ENCODE measurements at regions of chr11 and their contacts with region 1.

Region 1: DNA sequence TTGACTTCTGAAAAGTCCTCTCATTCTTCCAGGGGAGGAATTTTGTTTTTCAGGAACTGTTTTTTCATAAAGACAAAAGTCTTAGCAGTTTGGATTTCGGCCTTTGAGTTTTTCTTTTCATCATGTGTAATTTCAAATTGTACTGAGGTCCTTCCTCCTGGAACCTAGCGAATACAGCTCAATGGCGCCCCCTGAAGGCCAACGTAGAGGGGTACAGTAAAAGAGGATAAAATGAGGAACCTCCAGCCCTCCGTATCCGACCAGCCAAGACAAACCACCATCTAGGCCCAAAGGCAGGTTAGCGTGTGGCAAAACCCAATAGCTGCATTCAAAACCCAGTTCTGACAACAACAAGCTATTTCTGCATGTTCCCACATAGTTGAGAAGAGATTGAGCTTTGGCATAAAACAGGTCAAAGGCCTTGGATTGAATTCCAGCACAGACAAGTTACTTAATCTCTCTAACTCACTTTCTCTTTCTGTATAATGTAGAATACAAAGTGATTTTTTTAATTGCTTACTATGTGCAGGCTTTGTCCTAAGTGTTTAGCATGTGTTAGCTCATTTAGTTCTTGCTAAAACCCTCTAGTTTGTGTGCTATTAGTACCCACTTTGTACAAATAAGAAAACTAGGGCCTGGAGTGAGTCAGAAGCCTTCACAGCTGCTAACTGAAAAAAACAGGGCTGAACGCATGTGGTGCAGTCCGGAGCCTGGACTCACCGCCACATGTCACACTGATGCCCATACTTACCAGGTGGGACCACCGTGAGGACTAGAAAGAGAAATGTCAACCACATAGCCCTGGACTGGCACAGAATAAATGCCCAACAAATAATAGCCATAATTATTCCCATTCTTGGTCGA is 43.2 kb upstream of the ETS1 start:
- DNase-seq: peak; percentile 91
- H3K4me3 Mint-ChIP-seq: peak overlapping the region; percentile 38
- H3K27ac Mint-ChIP-seq: peak overlapping the region; percentile 85
- H3K4me1 Mint-ChIP-seq: peaks cover 63% of the 10 kb centered on the region
- H3K27me3 Mint-ChIP-seq: no peaks in the 10 kb centered on the region

Region 2: GRCh38 chr11:128157423-128158298 is 472.9 kb before region 1 on chr11:
- CTCF ChIA-PET with region 1: interaction called, 62 read pairs
- POLR2A ChIA-PET with region 1: no interaction called
- DNase-seq: peak; percentile 52
- H3K4me3 Mint-ChIP-seq: peak overlapping the region; percentile 53
- H3K27ac Mint-ChIP-seq: peak overlapping the region; percentile 55
- H3K4me1 Mint-ChIP-seq: peaks cover 7% of the 10 kb centered on the region
- H3K27me3 Mint-ChIP-seq: peaks cover 8% of the 10 kb centered on the region

Region 3: GRCh38 chr11:128458321-128458720 is 172.3 kb before region 1 on chr11:
- CTCF ChIA-PET with region 1: interaction called, 5 read pairs
- POLR2A ChIA-PET with region 1: interaction called, 10 read pairs
- DNase-seq: no peak
- H3K4me3 Mint-ChIP-seq: no peak overlapping the region
- H3K27ac Mint-ChIP-seq: peak overlapping the region; percentile 7
- H3K4me1 Mint-ChIP-seq: peaks cover 67% of the 10 kb centered on the region
- H3K27me3 Mint-ChIP-seq: no peaks in the 10 kb centered on the region

Region 4: DNA sequence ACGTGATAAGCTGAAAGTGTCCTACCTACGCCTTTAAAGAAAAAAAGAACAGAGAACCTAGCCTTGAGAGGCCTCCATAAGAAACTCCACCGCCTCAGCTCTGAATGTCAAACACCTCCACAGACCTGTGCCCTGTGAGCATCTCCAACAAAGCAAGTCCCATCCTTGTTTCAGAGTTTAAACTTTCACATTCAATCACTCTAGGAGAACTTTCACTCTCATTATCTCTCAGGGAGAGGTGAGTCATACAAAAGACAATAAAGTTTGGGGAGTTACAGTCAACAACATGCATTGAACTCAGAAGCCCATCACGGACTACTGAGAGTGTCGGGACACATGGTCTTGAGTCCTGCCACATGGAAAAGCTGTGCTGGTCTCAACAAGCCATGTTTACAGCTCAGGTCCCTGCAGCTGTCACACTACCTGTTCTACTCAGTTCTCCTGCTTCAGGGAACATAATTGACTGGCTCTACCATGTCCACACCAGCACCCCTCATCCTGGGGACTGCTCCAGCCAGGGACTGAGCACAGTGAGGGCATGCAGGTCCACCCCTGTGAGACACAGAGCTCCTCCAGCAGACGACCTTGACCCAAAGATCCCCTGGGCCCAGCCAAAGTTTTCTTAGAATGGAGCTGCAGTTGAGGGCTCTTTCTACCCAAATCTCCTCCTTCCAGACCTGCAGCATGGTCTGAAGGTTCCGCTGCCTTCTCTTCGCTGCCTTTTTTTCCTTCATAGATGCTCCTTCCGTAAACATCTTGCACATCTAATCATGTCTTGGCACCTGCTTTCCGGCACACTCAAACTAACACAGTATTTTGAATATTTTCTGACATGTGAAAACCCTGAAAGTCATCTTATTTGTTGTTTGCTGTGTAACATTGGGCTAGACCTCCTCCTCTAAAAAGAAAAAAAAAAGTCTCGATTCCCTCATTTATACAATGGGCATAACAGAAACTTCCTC is 158.2 kb before region 1 on chr11:
- CTCF ChIA-PET with region 1: interaction called, 16 read pairs
- POLR2A ChIA-PET with region 1: interaction called, 17 read pairs
- DNase-seq: no peak
- H3K4me3 Mint-ChIP-seq: peak overlapping the region; percentile 44
- H3K27ac Mint-ChIP-seq: peak overlapping the region; percentile 80
- H3K4me1 Mint-ChIP-seq: peaks cover 99% of the 10 kb centered on the region
- H3K27me3 Mint-ChIP-seq: no peaks in the 10 kb centered on the region

Region 5: DNA sequence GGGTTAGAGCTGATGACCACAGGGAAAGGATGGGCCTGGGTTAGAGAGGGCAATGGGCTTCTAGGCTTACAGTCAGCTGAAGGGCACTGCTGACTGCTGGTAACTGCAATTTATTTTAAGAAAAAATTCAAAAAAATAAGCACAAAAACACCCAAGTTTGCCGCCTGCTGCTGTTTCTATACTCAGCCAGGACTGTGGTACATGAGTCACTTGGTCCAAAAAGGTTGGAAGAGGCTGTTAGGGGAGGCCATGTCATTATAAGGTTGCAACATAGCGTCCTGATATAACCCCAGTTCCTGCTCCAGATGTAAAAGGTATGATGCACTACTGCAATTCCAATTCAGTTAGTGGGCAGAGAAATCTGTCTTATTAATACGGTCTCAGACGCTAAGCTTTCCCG is 142.1 kb before region 1 on chr11:
- CTCF ChIA-PET with region 1: interaction called, 8 read pairs
- POLR2A ChIA-PET with region 1: interaction called, 19 read pairs
- DNase-seq: no peak
- H3K4me3 Mint-ChIP-seq: peak overlapping the region; percentile 29
- H3K27ac Mint-ChIP-seq: peak overlapping the region; percentile 87
- H3K4me1 Mint-ChIP-seq: peaks cover 95% of the 10 kb centered on the region
- H3K27me3 Mint-ChIP-seq: no peaks in the 10 kb centered on the region

Region 6: DNA sequence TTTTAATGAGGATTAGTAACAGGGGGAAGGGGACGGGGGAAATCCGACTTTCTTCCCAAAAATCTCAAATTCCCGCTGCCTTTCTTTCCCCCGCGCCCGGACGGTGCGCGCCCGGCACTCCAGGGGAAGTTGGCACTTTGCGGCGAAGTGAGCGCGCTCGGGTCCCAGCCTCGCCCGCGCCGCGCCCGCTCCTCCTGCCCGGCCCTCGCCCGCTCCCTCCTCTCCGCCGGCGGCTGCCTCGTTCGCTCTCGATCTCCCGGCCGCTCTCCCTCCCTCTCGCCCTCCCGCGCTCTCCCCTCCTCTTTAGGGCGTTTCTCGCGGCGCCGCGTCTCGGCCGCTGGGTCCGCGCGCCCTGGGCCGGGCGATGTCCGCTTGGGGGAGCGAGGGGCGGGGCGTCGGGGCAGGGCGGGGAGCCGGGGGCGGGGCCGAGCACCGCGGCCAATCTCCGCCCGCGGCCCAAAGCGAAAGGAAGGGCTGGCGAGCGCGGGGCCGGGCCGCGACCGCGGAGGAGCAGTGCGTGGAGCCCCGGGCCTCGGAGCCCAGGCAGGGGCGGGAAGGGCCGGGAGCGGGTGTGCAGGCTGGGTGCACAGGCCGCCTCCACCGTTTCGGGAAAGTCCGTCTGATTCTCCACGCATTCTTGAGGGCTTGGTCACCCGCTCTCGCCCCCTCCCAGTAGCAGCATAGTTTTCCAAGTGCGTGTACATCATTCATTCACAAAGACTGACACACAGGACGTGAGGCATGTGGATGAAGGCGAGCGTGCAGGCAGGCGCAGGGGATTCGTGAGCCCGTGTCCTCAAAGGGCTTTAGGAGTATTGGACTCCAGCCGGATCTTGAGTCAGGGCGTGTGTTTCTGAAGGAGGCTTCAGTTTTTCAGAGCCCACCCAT is 108.3 kb before region 1 on chr11:
- CTCF ChIA-PET with region 1: interaction called, 110 read pairs
- POLR2A ChIA-PET with region 1: interaction called, 525 read pairs
- DNase-seq: peak; percentile 94
- H3K4me3 Mint-ChIP-seq: peak overlapping the region; percentile 97
- H3K27ac Mint-ChIP-seq: peak overlapping the region; percentile 88
- H3K4me1 Mint-ChIP-seq: peaks cover 44% of the 10 kb centered on the region
- H3K27me3 Mint-ChIP-seq: no peaks in the 10 kb centered on the region

Region 7: GRCh38 chr11:128831174-128832120 is 200.8 kb after region 1 on chr11:
- CTCF ChIA-PET with region 1: interaction called, 72 read pairs
- POLR2A ChIA-PET with region 1: interaction called, 5 read pairs
- DNase-seq: peak; percentile 89
- H3K4me3 Mint-ChIP-seq: no peak overlapping the region
- H3K27ac Mint-ChIP-seq: peak overlapping the region; percentile 29
- H3K4me1 Mint-ChIP-seq: peaks cover 28% of the 10 kb centered on the region
- H3K27me3 Mint-ChIP-seq: no peaks in the 10 kb centered on the region

Region 8: DNA sequence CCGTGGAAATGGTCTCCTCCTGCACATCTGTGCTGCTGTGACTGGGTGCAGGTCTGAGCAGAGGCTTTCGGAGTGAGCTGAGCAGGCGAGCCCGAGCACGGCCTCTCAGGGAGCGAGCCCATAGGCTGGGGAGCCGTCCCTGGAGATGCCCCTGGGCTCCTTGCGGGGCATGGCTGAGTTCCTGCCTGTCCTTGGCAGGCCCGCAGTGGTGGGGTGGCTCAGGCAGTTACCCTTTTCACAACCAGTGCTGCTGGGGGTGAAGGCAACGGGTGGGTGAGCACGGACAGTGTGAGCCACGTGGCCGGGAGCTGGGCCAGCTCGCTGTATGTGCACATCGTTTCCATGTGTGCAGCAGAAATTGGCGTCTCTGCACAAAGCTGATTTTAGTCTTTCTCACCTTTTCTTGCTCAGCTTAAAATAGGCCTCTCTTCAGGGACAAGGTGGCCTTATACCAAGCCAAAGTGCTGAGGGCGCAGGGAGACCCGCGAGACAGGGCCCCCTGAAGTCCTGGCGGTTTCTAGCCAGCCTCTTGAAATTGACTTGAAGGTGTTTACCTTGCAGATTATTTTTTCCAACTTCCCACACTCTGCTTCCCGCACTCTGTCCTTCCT is 312.3 kb after region 1 on chr11 and contains the start of gene TP53AIP1:
- CTCF ChIA-PET with region 1: no interaction called
- POLR2A ChIA-PET with region 1: no interaction called
- DNase-seq: no peak
- H3K4me3 Mint-ChIP-seq: no peak within 1 kb of the TSS
- H3K27ac Mint-ChIP-seq: no peak within 1 kb of the TSS
- H3K4me1 Mint-ChIP-seq: no peaks in the 10 kb centered on the region
- H3K27me3 Mint-ChIP-seq: peaks cover 4% of the 10 kb centered on the region
- total RNA-seq, gene TP53AIP1: not detected